Heart left ventricle (tissue), 16 donors: ENCODE measurements at regions of chr18 and their contacts with region 1.

Region 1: GRCh38 chr18:37385846-37386778 is 179.5 kb downstream of the CELF4 start:
- DNase-seq: no peak
- ATAC-seq: no peak
- H3K4me3 ChIP-seq: no peak overlapping the region
- H3K27ac ChIP-seq: no peak overlapping the region
- H3K4me1 ChIP-seq: no peaks in the 10 kb centered on the region
- H3K27me3 ChIP-seq: peaks cover 0 to 20% (median 0%) of the 10 kb centered on the region in 9 donors
- CTCF ChIP-seq: peak; percentile 60 to 97 (median 75)
- POLR2A ChIP-seq: no peak

Region 2: DNA sequence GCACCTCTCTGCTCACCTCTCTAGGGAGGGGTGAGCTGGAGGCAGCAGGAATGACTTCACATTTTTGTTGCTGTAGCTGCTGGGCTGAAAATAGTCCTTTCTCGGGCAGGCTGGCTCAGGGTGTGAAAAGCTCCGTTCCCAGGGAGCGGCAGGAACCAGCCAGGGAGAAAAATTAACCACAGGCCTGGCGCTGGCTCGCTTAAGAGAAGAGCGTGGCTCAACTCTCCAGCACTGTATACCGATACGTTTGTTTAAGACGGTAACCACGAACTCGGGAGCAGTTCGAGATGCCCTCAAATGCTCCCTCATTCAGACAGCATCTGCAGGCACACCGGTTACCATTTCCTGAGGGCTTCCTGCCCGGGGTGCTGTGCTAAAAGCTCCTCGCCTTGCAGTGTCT is 49.9 kb after region 1 on chr18:
- intact Hi-C with region 1: loop called in 4 of 10 experiments (anchors 5 to 10 kb)
- DNase-seq: no peak
- ATAC-seq: peak in 3 of 4 donors; percentile 37 to 73 (median 71)
- H3K4me3 ChIP-seq: no peak overlapping the region
- H3K27ac ChIP-seq: no peak overlapping the region
- H3K4me1 ChIP-seq: peaks cover 0 to 16% (median 0%) of the 10 kb centered on the region in 12 donors
- H3K27me3 ChIP-seq: no peaks in the 10 kb centered on the region
- CTCF ChIP-seq: no peak
- POLR2A ChIP-seq: no peak

Region 3: DNA sequence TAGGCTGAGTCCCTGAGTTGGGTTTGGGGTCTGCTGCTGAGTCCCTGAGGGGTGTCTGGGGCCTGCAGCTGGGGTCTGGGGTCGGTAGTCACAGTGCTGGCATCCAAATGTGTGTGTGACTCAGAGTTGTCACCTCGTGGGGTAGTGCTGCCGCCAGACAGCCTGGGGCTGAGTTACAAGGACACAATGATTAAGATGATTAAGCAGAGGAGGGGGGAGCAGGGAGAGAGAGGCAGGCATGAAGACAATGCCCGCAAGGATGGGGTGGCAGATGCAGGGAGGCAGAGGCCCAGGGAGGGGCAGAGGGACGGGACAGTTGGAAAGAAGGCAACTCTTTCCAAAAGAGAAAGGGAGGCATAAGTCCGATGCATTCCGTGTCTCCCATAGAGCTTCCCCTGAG is 59.3 kb after region 1 on chr18:
- intact Hi-C with region 1: loop called in 2 of 10 experiments (anchors 5 to 10 kb)
- DNase-seq: no peak
- ATAC-seq: no peak
- H3K4me3 ChIP-seq: no peak overlapping the region
- H3K27ac ChIP-seq: no peak overlapping the region
- H3K4me1 ChIP-seq: peaks cover 0 to 1% (median 0%) of the 10 kb centered on the region in 12 donors
- H3K27me3 ChIP-seq: peaks cover 0 to 17% (median 0%) of the 10 kb centered on the region in 9 donors
- CTCF ChIP-seq: no peak
- POLR2A ChIP-seq: no peak

Region 4: GRCh38 chr18:37476182-37476581 is 90.1 kb after region 1 on chr18:
- intact Hi-C with region 1: loop called in 7 of 10 experiments (anchors 1 to 10 kb)
- DNase-seq: no peak
- ATAC-seq: peak in 1 of 4 donors; percentile 11
- H3K4me3 ChIP-seq: no peak overlapping the region
- H3K27ac ChIP-seq: no peak overlapping the region
- H3K4me1 ChIP-seq: no peaks in the 10 kb centered on the region
- H3K27me3 ChIP-seq: peaks cover 0 to 35% (median 0%) of the 10 kb centered on the region in 9 donors
- CTCF ChIP-seq: peak; percentile 29 to 57 (median 48)
- POLR2A ChIP-seq: no peak

Region 5: GRCh38 chr18:37484983-37485834 is 99.1 kb after region 1 on chr18:
- intact Hi-C with region 1: loop called in 1 of 10 experiments (anchors 5 kb)
- DNase-seq: no peak
- ATAC-seq: peak in 2 of 4 donors; percentile 35 to 56
- H3K4me3 ChIP-seq: peak overlapping the region in 1 of 12 donors; percentile 23
- H3K27ac ChIP-seq: no peak overlapping the region
- H3K4me1 ChIP-seq: peaks cover 0 to 12% (median 0%) of the 10 kb centered on the region in 12 donors
- H3K27me3 ChIP-seq: peaks cover 23 to 73% (median 43%) of the 10 kb centered on the region in 9 donors
- CTCF ChIP-seq: peak in 7 of 12 donors; percentile 10 to 49 (median 30)
- POLR2A ChIP-seq: no peak